Lower lobe of right lung (tissue), 2 donors: ENCODE measurements at regions of chr3 and their contacts with region 1.

Region 1: DNA sequence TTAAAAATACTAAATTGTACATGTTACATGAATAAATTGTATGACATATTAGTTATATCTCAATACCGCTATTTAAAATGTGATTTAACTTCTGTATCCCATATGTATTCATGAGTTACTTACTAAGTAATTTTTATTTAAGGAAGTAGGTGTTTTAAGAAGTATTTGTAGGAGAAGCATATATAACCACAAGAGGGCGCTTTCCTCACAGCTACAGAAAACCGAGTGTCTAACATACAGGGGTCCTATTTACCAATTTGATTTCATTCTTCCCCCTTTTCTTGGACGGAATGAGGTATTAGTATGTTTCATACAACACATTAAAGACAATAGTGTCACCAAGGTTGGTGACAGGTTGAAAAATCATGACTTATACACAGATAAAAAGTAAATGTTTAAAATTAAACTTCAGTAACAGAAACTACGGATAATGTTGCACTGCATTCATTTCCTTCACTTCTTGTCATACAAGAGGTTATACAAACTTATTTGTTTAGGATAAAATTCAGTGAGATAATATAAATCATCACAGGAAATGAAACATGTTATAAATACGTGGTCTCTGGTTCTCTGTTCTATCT is 253.6 kb downstream of the MAGI1 start:
- DNase-seq: no peak
- ATAC-seq: peak in 1 of 2 donors; percentile 66
- H3K4me3 ChIP-seq: no peak overlapping the region
- H3K27ac ChIP-seq: no peak overlapping the region
- H3K4me1 ChIP-seq: peaks cover 4% of the 10 kb centered on the region
- H3K27me3 ChIP-seq: no peaks in the 10 kb centered on the region
- CTCF ChIP-seq: peak; percentile 76

Region 2: GRCh38 chr3:66138336-66139313 is 353.5 kb after region 1 on chr3:
- intact Hi-C with region 1: loop called (anchors 5 kb)
- DNase-seq: no peak
- ATAC-seq: peak; percentile 86 to 91
- H3K4me3 ChIP-seq: no peak overlapping the region
- H3K27ac ChIP-seq: no peak overlapping the region
- H3K4me1 ChIP-seq: no peaks in the 10 kb centered on the region
- H3K27me3 ChIP-seq: no peaks in the 10 kb centered on the region
- CTCF ChIP-seq: peak; percentile 73